K562 (cell line): ENCODE measurements at regions of chr12 and their contacts with region 1.

Region 1: GRCh38 chr12:108618079-108618952 is 15.4 kb downstream of the SELPLG start:
- DNase-seq: peak; percentile 82 to 91 (median 84)
- ATAC-seq: peak; percentile 94
- H3K4me3 ChIP-seq: no peak overlapping the region
- H3K27ac ChIP-seq: no peak overlapping the region
- H3K4me1 ChIP-seq: peaks cover 16 to 20% of the 10 kb centered on the region in 2 experiments; a peak in 3 of 5 replicates
- H3K27me3 ChIP-seq: no peaks in the 10 kb centered on the region
- CTCF ChIP-seq: peak; percentile 91 to 97 (median 96)
- EP300 ChIP-seq: no peak
- POLR2A ChIP-seq: no peak
- RAD21 ChIP-seq: peak; percentile 91 to 94

Region 2: GRCh38 chr12:108633534-108634248 is 15.4 kb after region 1 on chr12 and contains the start of gene SELPLG:
- CTCF ChIA-PET with region 1: no interaction called
- POLR2A ChIA-PET with region 1: interaction called, 16 read pairs
- in situ Hi-C with region 1: no loop called
- intact Hi-C with region 1: no loop called
- DNase-seq: peak in 3 of 4 experiments; percentile 40 to 50 (median 45)
- ATAC-seq: no peak
- H3K4me3 ChIP-seq: no peak within 1 kb of the TSS
- H3K27ac ChIP-seq: peak within 1 kb of the TSS; percentile 76
- H3K4me1 ChIP-seq: peaks cover 55 to 57% of the 10 kb centered on the region in 2 experiments
- H3K27me3 ChIP-seq: no peaks in the 10 kb centered on the region
- CTCF ChIP-seq: no peak
- EP300 ChIP-seq: no peak
- POLR2A ChIP-seq: no peak
- RAD21 ChIP-seq: no peak
- polyA plus RNA-seq, gene SELPLG: 0.22 to 0.34 TPM

Region 3: DNA sequence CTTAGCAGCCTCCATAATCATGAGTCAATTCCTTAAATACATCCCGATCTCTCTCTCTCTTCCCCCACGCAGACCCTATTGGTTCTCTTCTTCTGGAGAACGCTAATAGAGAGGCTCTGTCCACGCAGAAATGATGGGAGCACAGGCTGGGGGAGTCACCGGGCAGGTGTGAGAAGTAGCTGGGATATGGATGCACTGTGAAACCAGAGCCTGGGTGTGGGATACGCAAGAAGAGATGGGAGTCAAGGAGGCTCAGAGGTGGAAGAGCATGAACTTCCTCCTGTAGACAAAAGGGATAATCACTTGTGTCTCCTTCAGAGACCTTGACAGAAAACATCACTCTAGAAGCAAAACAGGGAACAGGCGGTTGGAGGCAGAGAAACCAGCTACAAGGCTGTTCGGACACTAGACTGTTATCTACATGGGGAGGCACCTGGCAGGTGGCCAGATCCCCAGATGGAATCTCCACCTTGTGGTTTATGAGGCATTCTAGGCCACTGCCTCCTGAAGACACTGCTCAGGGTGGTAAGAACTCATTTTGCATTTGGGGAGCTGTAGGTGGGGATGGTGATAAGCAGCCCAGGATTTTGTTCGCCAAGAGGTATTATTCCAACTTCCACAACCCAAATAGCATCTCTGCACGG is 22.6 kb after region 1 on chr12:
- CTCF ChIA-PET with region 1: no interaction called
- POLR2A ChIA-PET with region 1: no interaction called
- in situ Hi-C with region 1: no loop called
- intact Hi-C with region 1: loop called (anchors 1 kb)
- DNase-seq: peak; percentile 62 to 93 (median 74)
- ATAC-seq: peak; percentile 84
- H3K4me3 ChIP-seq: no peak overlapping the region
- H3K27ac ChIP-seq: peak overlapping the region; percentile 61
- H3K4me1 ChIP-seq: peaks cover 14 to 23% of the 10 kb centered on the region in 2 experiments
- H3K27me3 ChIP-seq: no peaks in the 10 kb centered on the region
- CTCF ChIP-seq: peak in 2 of 3 experiments; percentile 21 to 33; a peak in 3 of 6 replicates
- EP300 ChIP-seq: peak; percentile 77
- POLR2A ChIP-seq: 0 out of 2 replicates have a peak, but pooled peaks have one; percentile 34
- RAD21 ChIP-seq: peak; percentile 23 to 52; a peak in 3 of 4 replicates

Region 4: DNA sequence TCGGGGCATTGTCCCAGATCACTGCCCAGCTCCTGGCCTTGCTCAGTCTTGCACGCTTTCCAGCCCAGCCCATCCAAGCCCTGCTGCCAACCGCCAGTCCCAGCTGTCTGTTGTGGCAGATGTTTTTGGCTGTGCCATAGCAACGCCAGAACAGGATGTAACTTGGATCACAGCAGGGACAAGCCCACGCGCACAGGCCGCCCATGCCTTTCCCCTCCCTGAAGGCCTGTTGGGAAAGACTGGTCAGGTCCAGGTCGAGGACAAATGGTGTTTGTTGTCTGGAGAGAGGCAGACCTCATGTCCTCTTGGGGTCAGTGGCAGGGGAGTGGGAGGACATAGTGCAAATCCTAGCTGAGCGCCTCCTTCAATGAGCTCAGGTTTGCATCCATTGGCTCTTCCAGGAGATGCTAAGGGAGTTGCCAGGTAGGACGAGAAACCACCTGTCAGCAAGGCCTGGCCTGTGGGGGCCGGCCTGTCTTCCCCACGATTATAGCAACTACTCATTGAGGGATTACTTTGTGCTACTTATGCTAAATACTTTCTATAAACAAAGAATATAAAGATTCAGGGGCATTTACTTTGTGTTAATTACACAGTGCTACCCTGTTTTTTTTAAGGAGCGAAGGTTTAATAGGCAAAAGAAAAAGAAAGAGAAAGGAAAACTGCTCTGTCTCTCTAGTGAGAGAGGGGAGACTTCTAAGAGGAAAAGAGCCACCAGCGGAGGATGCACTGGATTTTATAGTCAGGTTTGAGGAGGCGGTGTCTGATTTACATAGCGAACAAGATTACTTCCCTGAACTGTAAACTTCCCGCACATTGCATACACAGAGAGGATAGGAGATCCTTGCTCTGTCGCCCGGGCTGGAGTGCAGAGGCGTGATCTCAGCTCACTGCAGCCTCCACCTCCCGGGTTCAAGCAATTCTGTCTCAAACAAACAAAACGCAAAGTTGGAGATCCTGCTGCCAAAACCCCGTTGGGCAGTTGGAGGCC is 155.8 kb after region 1 on chr12:
- CTCF ChIA-PET with region 1: no interaction called
- POLR2A ChIA-PET with region 1: no interaction called
- in situ Hi-C with region 1: no loop called
- intact Hi-C with region 1: no loop called
- DNase-seq: no peak
- ATAC-seq: no peak
- H3K4me3 ChIP-seq: no peak overlapping the region
- H3K27ac ChIP-seq: no peak overlapping the region
- H3K4me1 ChIP-seq: peaks cover 0 to 12% of the 10 kb centered on the region in 2 experiments; a peak in 2 of 5 replicates
- H3K27me3 ChIP-seq: peaks cover 0 to 4% of the 10 kb centered on the region in 2 experiments; a peak in 4 of 5 replicates
- CTCF ChIP-seq: no peak
- EP300 ChIP-seq: no peak
- POLR2A ChIP-seq: no peak
- RAD21 ChIP-seq: no peak